AG04449 (cell line): ENCODE measurements at regions of chr1 and their contacts with region 1.

Region 1: DNA sequence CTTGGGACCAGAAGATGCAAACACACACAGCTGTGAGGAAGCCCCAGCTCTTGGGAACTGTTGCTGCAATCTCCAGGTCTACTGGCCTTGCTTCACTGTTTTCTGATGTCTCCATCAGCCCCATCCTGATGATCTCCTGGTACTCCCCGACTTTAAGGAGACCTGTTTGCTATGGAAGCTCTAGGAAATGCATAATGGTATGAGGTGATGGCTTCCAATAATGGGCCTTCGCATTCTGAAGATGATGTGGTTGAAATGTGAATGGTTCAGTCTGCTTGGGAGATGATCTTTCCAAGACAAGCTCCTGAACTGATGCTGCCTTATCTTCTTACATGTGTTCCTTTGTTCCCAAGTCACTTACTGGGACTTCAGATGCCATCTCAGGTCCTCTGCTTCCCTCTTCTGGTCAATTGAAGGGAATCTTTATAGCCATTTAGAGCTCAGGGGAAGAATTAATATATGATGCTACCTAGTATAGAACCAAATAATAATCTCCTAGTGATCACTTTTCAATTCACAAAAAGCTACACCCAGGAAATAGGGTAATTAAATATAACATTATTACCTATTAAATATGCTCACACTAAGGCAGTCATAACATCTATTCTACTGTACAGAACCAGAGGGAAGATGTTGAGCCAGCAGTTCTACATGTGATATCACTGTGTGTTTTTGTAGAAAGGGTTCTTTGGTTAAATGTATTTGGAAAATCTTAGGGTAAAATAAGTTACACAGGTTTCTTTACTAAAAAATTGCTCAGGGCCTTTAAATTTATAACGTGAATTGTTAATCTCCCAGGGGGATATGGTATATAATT is 73.9 kb upstream of the VTCN1 start:
- DNase-seq: peak; percentile 37
- H3K4me3 ChIP-seq: no peak overlapping the region
- CTCF ChIP-seq: peak; percentile 51

Region 2: GRCh38 chr1:117059678-117060440 is 224.7 kb before region 1 on chr1 and contains the start of gene TTF2:
- CTCF ChIA-PET with region 1: interaction called, 340 read pairs
- POLR2A ChIA-PET with region 1: no interaction called
- DNase-seq: peak; percentile 86
- H3K4me3 ChIP-seq: peak within 1 kb of the TSS; percentile 87
- CTCF ChIP-seq: no peak

Region 3: DNA sequence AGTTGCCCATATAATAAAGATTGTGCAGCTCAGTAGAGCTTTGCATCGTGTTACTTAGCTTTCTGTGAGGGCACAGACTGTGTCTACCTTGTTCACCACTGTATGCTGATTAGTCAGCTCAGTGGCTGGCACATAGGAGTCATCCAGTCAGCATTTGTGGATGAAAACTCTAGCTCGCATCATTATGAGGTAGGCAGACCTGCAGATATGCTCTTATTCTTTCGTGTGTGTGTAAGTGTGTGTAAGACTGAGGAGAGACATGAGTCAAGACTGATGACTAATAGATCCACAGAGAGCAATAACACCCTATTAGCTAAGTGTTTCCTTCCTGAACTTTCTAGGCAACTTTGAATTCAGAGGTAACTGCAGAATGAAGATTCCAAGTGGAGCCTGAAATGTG is 207.3 kb before region 1 on chr1:
- CTCF ChIA-PET with region 1: interaction called, 340 read pairs
- POLR2A ChIA-PET with region 1: no interaction called
- DNase-seq: peak; percentile 82
- H3K4me3 ChIP-seq: no peak overlapping the region
- CTCF ChIP-seq: no peak

Region 4: GRCh38 chr1:117113199-117113598 is 171.4 kb before region 1 on chr1:
- CTCF ChIA-PET with region 1: interaction called, 13 read pairs
- POLR2A ChIA-PET with region 1: no interaction called
- DNase-seq: no peak
- H3K4me3 ChIP-seq: no peak overlapping the region
- CTCF ChIP-seq: no peak

Region 5: DNA sequence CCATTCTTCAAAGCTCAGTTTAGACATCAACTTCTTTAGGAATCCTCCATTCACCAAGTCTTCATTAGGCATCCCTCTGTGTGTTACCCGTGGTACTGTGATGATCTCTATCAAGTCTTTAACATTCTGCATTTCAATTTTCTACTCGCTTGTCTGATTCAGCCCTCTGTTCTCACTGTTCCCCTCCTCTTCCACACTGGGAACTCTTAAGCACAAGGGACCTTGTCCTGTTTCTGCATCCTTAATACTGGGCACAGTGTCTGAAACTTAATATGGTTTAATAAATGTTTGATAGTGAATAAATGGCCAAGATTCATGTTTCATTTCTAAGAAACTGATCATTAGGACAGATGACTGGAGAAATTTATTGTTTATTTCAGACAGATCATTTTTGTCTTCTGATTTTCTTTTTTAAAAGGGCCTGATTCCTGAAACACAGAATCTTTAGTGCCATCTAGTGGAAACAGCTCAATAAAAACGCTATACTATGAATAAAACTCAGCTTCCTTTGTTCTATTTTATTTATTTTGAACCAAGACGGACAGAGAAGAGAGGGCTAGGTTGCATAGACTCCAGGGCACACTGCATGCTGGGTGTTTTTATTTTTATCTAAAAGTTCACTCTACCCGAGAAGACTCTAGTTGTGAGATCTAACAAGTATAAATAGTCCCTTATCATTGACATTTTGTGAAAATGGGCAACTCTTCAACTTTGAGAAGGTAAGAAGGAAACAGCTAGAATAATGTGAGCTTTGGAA is 156.1 kb before region 1 on chr1:
- CTCF ChIA-PET with region 1: interaction called, 61 read pairs
- POLR2A ChIA-PET with region 1: no interaction called
- DNase-seq: no peak
- H3K4me3 ChIP-seq: no peak overlapping the region
- CTCF ChIP-seq: no peak